Endothelial cell of umbilical vein (primary cell): ENCODE measurements at regions of chr16 and their contacts with region 1.

Region 1: GRCh38 chr16:83926726-83927397 is 26.2 kb upstream of the OSGIN1 start:
- DNase-seq: peak; percentile 54
- H3K4me3 ChIP-seq: no peak overlapping the region
- H3K27ac ChIP-seq: no peak overlapping the region
- H3K4me1 ChIP-seq: peaks cover 3% of the 10 kb centered on the region
- H3K27me3 ChIP-seq: no peaks in the 10 kb centered on the region
- CTCF ChIP-seq: peak; percentile 98
- POLR2A ChIP-seq: no peak

Region 2: GRCh38 chr16:83913245-83913633 is 13.6 kb before region 1 on chr16:
- CTCF ChIA-PET with region 1: interaction called, 14 read pairs
- POLR2A ChIA-PET with region 1: no interaction called
- dilution Hi-C with region 1: no loop called
- intact Hi-C with region 1: no loop called
- DNase-seq: no peak
- H3K4me3 ChIP-seq: no peak overlapping the region
- H3K27ac ChIP-seq: no peak overlapping the region
- H3K4me1 ChIP-seq: no peaks in the 10 kb centered on the region
- H3K27me3 ChIP-seq: no peaks in the 10 kb centered on the region
- CTCF ChIP-seq: no peak
- POLR2A ChIP-seq: no peak